ENCODE measurements at regions of chr9 and their contacts with region 1.

Region 1: DNA sequence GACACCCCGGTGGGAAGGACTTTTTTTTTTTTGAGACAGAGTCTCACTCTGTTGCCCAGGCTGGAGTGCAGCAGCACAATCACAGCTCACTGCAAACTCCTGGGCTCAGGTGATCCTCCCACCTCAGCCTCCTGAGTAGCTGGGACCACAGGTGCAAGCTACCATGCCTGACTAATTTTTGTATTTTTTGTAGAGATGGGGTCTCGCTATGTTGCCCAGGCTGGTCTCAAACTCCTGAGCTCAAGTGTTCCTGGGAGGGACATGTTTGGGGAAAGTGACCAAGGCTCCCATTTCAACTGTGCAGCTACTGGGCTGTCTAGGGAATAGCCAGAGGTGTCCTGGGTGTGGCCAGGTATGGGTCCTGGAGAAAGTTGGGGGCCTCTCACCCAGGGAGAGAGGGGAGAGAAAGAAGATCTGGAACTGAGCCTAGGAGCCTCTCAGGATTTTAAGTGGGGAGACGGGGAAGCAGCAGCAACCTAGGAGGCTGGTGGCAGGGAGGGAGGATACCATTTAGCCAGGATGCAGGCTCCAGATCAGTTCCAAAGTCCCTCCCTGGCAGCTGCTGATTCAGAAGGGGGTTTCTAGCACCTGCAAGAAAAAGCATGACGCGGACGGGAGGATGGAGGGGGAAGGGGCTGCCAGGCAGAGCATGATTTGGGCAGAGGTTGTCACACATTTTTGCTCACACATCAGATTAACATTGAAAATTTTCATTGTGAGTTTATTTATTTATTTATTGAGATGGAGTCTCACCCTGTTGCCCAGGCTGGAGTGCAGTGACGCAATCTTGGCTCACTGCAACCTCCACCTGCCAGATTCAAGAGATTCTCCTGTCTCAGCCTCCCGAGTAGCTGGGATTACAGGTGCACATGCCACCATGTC is 6.7 kb upstream of the TOR1B start:
- DNase-seq: no peak
- ATAC-seq: no peak
- H3K4me3 ChIP-seq: no peak overlapping the region
- H3K4me3 Mint-ChIP-seq: no peak overlapping the region
- H3K27ac ChIP-seq: no peak overlapping the region
- H3K27ac Mint-ChIP-seq: no peak overlapping the region
- H3K4me1 ChIP-seq: no peaks in the 10 kb centered on the region
- H3K4me1 Mint-ChIP-seq: peaks cover 0 to 2% (median 0%) of the 10 kb centered on the region in 7 donors
- H3K27me3 ChIP-seq: no peaks in the 10 kb centered on the region
- H3K27me3 Mint-ChIP-seq: peaks cover 0 to 8% (median 0%) of the 10 kb centered on the region in 5 donors

Region 2: DNA sequence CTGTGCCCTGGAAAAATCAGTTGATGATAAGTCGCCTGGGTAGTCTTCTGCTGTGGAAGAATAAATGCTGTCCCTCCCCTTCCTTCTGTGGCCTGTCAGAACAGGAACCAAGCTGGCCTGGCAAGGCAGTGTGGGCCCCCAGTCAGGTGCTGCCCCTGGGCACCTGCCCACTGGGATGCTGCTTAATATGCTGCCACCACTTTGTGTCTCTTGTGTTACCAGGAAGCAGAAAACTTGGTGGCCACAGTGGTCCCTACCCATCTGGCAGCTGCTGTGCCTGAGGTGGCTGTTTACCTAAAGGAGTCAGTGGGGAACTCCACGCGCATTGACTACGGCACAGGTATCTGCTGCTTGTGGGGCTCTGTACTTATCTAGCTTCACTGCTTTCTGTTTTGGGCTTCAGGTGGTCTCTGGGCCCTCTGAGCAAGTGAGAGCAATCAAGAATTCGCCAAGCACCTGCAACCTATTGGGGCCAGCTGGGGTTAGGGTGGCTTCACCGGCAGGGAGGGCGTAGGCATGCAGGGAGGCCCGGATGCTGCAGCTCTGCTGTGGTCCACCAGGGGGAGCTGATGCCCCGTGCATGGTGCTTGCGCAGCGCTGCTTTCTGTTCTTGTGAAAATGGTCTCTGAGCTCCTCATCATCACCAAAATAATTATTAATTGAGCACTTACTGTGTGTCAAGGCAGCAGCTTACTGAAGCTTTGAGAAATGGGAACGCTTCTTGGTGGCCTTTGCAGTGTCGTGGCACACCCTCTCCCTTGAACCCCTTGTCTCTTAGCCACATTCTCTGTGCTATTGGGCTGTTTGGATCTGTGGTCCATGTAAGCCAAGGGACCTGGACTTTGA is 664.7 kb before region 1 on chr9:
- CTCF ChIA-PET with region 1: interaction called, 12 read pairs
- POLR2A ChIA-PET with region 1: no interaction called
- intact Hi-C with region 1: no loop called
- DNase-seq: peak; percentile 71 to 90 (median 81)
- ATAC-seq: peak; percentile 100
- H3K4me3 ChIP-seq: no peak overlapping the region
- H3K4me3 Mint-ChIP-seq: peak overlapping the region in 2 of 10 donors; percentile 10 to 23
- H3K27ac ChIP-seq: peak overlapping the region; percentile 24
- H3K27ac Mint-ChIP-seq: peak overlapping the region in 6 of 9 donors; percentile 11 to 54 (median 46)
- H3K4me1 ChIP-seq: no peaks in the 10 kb centered on the region
- H3K4me1 Mint-ChIP-seq: peaks cover 0 to 9% (median 6%) of the 10 kb centered on the region in 7 donors
- H3K27me3 ChIP-seq: no peaks in the 10 kb centered on the region
- H3K27me3 Mint-ChIP-seq: no peaks in the 10 kb centered on the region

Region 3: GRCh38 chr9:130235897-130236668 is 439.8 kb after region 1 on chr9:
- CTCF ChIA-PET with region 1: no interaction called
- POLR2A ChIA-PET with region 1: no interaction called
- intact Hi-C with region 1: no loop called
- DNase-seq: peak; percentile 41 to 79 (median 63)
- ATAC-seq: peak; percentile 79
- H3K4me3 ChIP-seq: no peak overlapping the region
- H3K4me3 Mint-ChIP-seq: peak overlapping the region in 7 of 10 donors; percentile 24 to 75 (median 54)
- H3K27ac ChIP-seq: no peak overlapping the region
- H3K27ac Mint-ChIP-seq: peak overlapping the region in 1 of 9 donors; percentile 43
- H3K4me1 ChIP-seq: peaks cover 7 to 11% of the 10 kb centered on the region in 2 donors
- H3K4me1 Mint-ChIP-seq: peaks cover 0 to 25% (median 15%) of the 10 kb centered on the region in 7 donors
- H3K27me3 ChIP-seq: no peaks in the 10 kb centered on the region
- H3K27me3 Mint-ChIP-seq: peaks cover 0 to 2% (median 0%) of the 10 kb centered on the region in 5 donors

Region 4: DNA sequence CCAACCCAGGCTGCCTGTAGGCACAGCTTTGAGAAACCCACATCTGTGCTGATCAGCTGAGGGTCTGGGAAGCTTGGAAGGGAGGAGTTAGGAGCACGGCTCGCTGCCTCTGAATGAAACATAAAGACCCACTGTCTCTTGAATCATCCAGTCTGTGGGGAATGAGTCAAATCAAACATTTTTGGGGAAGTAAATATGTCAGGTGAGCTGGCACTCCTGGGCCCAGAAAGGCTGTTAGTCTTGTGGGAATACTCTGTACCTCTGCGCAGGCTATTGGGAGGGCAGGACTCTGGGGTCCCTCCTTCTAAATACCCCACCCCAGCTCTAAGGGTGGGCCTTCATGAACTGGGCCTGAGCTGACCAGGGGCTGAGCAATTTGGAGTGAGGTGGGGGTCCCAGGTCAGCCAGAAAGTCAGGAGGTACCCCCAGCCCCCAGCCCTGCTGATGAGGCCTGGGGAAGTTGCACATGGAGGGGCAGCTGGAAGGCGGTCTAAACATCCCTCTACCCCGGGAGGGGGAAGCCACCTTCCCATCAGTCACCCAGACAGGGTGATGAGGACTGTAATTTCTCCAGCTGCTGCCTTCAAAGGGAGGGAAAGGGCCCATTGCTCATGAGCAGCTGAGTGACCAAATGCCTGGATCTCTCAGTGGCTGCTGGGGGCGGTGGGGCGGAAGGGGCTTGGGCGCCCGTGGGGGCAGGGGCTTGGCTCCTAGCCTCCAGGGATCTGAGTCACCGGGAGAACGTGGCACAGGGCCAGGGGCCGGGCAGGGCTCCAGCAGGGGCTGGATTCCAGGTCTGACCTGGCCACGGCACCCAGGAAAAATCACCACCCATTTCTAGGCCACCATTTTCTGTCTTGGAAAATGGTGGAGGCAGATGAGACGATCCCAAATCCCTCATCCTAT is 1132.0 kb after region 1 on chr9:
- CTCF ChIA-PET with region 1: no interaction called
- POLR2A ChIA-PET with region 1: no interaction called
- intact Hi-C with region 1: no loop called
- DNase-seq: no peak
- ATAC-seq: no peak
- H3K4me3 ChIP-seq: no peak overlapping the region
- H3K4me3 Mint-ChIP-seq: no peak overlapping the region
- H3K27ac ChIP-seq: no peak overlapping the region
- H3K27ac Mint-ChIP-seq: no peak overlapping the region
- H3K4me1 ChIP-seq: no peaks in the 10 kb centered on the region
- H3K4me1 Mint-ChIP-seq: peaks cover 0 to 4% (median 0%) of the 10 kb centered on the region in 7 donors
- H3K27me3 ChIP-seq: no peaks in the 10 kb centered on the region
- H3K27me3 Mint-ChIP-seq: peaks cover 11 to 28% (median 18%) of the 10 kb centered on the region in 5 donors

Measured in naive thymus-derived CD4-positive, alpha-beta T cell (primary cell).